GM13977 (cell line): ENCODE measurements at regions of chr14 and their contacts with region 1.

Region 1: GRCh38 chr14:64880221-64881121 is 764 bp upstream of the SPTB start:
- DNase-seq: peak; percentile 81
- CTCF ChIP-seq: no peak

Region 2: DNA sequence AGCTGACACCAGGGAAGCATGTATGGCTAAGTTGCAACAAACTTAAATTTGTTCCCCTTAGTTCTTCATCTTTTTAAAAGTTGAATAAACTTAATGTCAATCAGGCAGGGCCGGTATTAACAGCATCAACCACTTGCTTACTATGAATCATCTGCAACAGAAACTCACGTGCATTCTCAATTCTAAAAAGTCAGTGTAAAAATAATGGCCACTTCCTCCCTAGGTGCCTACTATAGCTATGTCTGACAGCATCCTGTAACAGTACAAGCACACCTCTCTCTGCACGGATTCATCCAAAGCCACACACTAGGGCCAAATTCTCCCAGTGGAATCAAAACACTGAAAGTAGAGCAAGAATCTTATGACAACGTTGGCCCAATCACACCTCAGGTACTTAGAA is 282.1 kb before region 1 on chr14:
- in situ Hi-C with region 1: no loop called
- DNase-seq: no peak
- CTCF ChIP-seq: no peak

Region 3: DNA sequence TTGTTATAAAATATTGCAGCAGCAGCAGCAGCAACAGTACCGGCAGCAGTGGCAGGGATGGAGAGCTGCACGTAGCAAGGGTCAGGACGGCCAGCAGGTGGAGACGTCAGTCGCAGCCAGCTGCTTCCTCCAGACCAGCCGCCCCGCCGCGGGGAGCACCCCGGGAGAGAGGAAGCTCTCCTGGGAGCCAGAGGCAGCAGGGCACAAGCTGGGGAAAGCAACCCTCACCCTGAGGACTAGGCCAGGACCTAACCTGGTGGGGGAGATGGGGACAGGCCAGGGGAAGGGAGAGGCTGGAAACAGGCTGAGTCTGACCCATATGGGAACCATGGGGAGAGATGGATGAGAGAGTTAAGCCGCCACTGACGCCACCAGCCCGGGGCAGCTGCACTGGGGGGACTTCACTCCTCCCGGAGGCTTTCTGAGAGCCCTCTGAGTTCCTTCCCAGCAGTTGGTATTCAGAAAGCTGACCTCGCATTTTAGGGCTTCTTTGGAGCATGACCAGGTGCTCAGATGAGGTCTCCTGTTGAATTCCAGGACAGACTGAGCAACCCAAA is 57.1 kb before region 1 on chr14:
- in situ Hi-C with region 1: loop called (anchors 10 kb)
- DNase-seq: peak; percentile 86
- CTCF ChIP-seq: peak; percentile 88